HCT116 (cell line): ENCODE measurements at regions of chr2 and their contacts with region 1.

Region 1: GRCh38 chr2:85772019-85772745 is 18.4 kb downstream of the ATOH8 start:
- DNase-seq: peak; percentile 73
- ATAC-seq: peak; percentile 82
- H3K4me3 ChIP-seq: peak overlapping the region; percentile 10 to 33
- H3K27ac ChIP-seq: peak overlapping the region; percentile 71
- H3K4me1 ChIP-seq: peaks cover 51 to 55% of the 10 kb centered on the region in 2 experiments
- H3K27me3 ChIP-seq: peaks cover 18% of the 10 kb centered on the region; the same call in 1 of the 2 replicates
- CTCF ChIP-seq: peak in 2 of 3 experiments; percentile 47 to 60; a peak in 4 of 6 replicates
- POLR2A ChIP-seq: no peak
- RAD21 ChIP-seq: no peak

Region 2: GRCh38 chr2:85760371-85760770 is 11.8 kb before region 1 on chr2:
- CTCF ChIA-PET with region 1: interaction called, 20 read pairs
- POLR2A ChIA-PET with region 1: interaction called, 6 read pairs
- RAD21 ChIA-PET with region 1: interaction called in 1 of 2 experiments, 3 read pairs
- intact Hi-C with region 1: no loop called
- DNase-seq: no peak
- ATAC-seq: no peak
- H3K4me3 ChIP-seq: no peak overlapping the region
- H3K27ac ChIP-seq: no peak overlapping the region
- H3K4me1 ChIP-seq: peaks cover 4 to 8% of the 10 kb centered on the region in 2 experiments
- H3K27me3 ChIP-seq: peaks cover 10% of the 10 kb centered on the region
- CTCF ChIP-seq: no peak
- POLR2A ChIP-seq: no peak
- RAD21 ChIP-seq: no peak